H1 (cell line): ENCODE measurements at regions of chr10 and their contacts with region 1.

Region 1: DNA sequence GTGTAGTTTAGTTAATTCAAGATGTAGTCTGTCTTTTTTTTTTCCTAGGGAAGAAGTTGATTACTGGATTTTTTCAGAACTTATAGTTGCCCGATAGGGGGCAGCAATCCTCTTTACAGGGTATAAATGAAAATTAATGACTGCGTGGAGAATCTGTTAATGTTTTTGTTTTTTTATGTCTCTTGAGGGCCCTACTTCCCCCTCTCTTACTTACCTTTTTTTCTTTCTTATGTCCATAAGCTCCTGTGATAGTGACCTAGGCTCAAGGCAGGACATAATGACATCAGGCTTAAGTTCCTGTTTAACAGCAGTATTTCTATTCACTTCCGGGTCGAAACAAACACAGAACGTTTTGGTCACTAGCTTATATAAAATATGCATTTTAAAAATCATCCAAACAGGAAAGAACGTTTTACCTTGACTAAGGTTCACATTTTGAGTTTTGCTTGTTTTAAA is 18.8 kb downstream of the CDC123 start:
- DNase-seq: no peak
- H3K4me3 ChIP-seq: no peak overlapping the region
- H3K27ac ChIP-seq: no peak overlapping the region
- H3K4me1 ChIP-seq: no peaks in the 10 kb centered on the region
- H3K27me3 ChIP-seq: no peaks in the 10 kb centered on the region
- CTCF ChIP-seq: peak in 2 of 3 experiments; percentile 15 to 49; a peak in 2 of 4 replicates
- EP300 ChIP-seq: no peak
- POLR2A ChIP-seq: no peak
- RAD21 ChIP-seq: peak in 1 of 2 experiments; percentile 13; a peak in 2 of 4 replicates

Region 2: DNA sequence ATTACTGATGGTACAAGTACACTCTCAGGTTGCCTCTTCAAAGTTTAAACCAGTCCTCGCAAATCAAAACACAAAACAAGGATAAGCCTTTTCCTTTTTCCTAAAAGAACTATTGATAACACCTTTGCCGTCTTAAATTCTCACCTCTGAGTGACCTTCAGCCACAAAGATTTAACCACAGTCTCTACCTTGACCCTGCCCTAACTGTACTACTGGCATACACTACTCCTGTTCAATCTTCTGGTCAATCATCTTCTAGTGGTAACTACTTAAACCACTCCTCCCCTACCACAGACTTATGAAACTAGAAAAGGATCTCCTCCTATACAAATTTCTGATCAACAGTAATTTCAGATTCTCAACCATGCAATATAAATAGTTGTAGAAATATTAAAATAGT is 187.3 kb before region 1 on chr10:
- CTCF ChIA-PET with region 1: no interaction called
- POLR2A ChIA-PET with region 1: no interaction called
- DNase-seq: no peak
- H3K4me3 ChIP-seq: no peak overlapping the region
- H3K27ac ChIP-seq: no peak overlapping the region
- H3K4me1 ChIP-seq: no peaks in the 10 kb centered on the region
- H3K27me3 ChIP-seq: no peaks in the 10 kb centered on the region
- CTCF ChIP-seq: no peak
- EP300 ChIP-seq: no peak
- POLR2A ChIP-seq: no peak
- RAD21 ChIP-seq: no peak

Region 3: GRCh38 chr10:12181065-12181775 is 33.6 kb before region 1 on chr10:
- CTCF ChIA-PET with region 1: interaction called, 10 read pairs
- POLR2A ChIA-PET with region 1: no interaction called
- DNase-seq: no peak
- H3K4me3 ChIP-seq: peak overlapping the region in 1 of 4 experiments; percentile 5; a peak in 1 of 8 replicates
- H3K27ac ChIP-seq: no peak overlapping the region
- H3K4me1 ChIP-seq: peaks cover 3 to 17% (median 11%) of the 10 kb centered on the region in 4 experiments; a peak in 5 of 7 replicates
- H3K27me3 ChIP-seq: no peaks in the 10 kb centered on the region
- CTCF ChIP-seq: no peak
- EP300 ChIP-seq: no peak
- POLR2A ChIP-seq: no peak
- RAD21 ChIP-seq: no peak

Region 4: DNA sequence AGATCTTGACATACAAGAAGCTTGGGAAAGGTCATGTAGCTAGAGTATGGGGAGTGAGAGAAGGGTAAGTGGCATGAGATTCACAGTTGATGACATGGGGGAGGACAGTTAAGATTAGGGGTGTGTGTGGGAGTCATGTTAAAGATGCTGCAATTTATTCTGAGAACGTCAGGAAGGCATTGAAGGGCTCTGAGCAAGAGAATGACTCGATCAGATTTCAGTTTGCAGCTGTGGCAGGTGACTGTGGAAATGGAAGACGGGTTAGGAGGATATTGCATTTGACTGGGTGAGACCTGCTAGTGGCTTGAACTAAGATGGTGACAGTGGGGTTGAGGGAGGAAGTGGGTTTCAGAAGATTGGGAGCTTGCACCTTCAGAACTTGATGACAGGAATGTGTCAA is 13.2 kb before region 1 on chr10:
- CTCF ChIA-PET with region 1: interaction called, 42 read pairs
- POLR2A ChIA-PET with region 1: interaction called, 8 read pairs
- DNase-seq: no peak
- H3K4me3 ChIP-seq: no peak overlapping the region
- H3K27ac ChIP-seq: no peak overlapping the region
- H3K4me1 ChIP-seq: no peaks in the 10 kb centered on the region
- H3K27me3 ChIP-seq: no peaks in the 10 kb centered on the region
- CTCF ChIP-seq: no peak
- EP300 ChIP-seq: no peak
- POLR2A ChIP-seq: no peak; a peak in 1 of 3 replicates
- RAD21 ChIP-seq: no peak

Region 5: GRCh38 chr10:12228851-12229250 is 14.1 kb after region 1 on chr10:
- CTCF ChIA-PET with region 1: interaction called, 15 read pairs
- POLR2A ChIA-PET with region 1: interaction called, 7 read pairs
- DNase-seq: no peak
- H3K4me3 ChIP-seq: no peak overlapping the region
- H3K27ac ChIP-seq: no peak overlapping the region
- H3K4me1 ChIP-seq: no peaks in the 10 kb centered on the region
- H3K27me3 ChIP-seq: no peaks in the 10 kb centered on the region
- CTCF ChIP-seq: no peak
- EP300 ChIP-seq: no peak
- POLR2A ChIP-seq: no peak
- RAD21 ChIP-seq: no peak

Region 6: DNA sequence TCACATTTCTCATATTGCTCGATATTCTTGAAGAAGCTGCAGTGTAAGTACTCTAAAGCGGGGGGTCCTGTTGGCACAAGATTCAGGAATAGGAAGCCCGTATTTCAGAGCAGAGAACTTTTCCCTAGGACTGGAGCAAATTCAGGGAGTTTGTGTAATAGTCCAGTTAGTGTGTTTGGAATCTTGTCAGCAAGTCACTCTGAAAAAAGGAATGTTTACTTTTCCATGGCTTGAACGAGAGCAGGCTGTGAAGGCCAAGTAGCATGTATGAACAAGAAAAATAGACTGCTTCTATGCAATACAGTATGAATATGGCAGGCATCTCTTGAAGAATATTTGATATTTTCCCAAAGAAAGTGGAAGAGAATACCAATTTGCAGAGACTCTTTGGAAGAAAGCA is 21.0 kb after region 1 on chr10:
- CTCF ChIA-PET with region 1: interaction called, 15 read pairs
- POLR2A ChIA-PET with region 1: no interaction called
- DNase-seq: no peak
- H3K4me3 ChIP-seq: no peak overlapping the region
- H3K27ac ChIP-seq: no peak overlapping the region
- H3K4me1 ChIP-seq: no peaks in the 10 kb centered on the region
- H3K27me3 ChIP-seq: no peaks in the 10 kb centered on the region
- CTCF ChIP-seq: no peak
- EP300 ChIP-seq: no peak
- POLR2A ChIP-seq: no peak
- RAD21 ChIP-seq: no peak

Region 7: GRCh38 chr10:12241810-12242529 is 27.2 kb after region 1 on chr10:
- CTCF ChIA-PET with region 1: interaction called, 13 read pairs
- POLR2A ChIA-PET with region 1: no interaction called
- DNase-seq: no peak
- H3K4me3 ChIP-seq: no peak overlapping the region
- H3K27ac ChIP-seq: no peak overlapping the region
- H3K4me1 ChIP-seq: no peaks in the 10 kb centered on the region
- H3K27me3 ChIP-seq: no peaks in the 10 kb centered on the region
- CTCF ChIP-seq: no peak
- EP300 ChIP-seq: no peak
- POLR2A ChIP-seq: no peak
- RAD21 ChIP-seq: no peak